GM12878 (cell line): ENCODE measurements at regions of chrX and their contacts with region 1.

Region 1: GRCh38 chrX:17046478-17047097 is 100.1 kb downstream of the REPS2 start:
- DNase-seq: peak; percentile 21
- ATAC-seq: peak; percentile 97
- H3K4me3 ChIP-seq: no peak overlapping the region
- H3K27ac ChIP-seq: no peak overlapping the region
- H3K4me1 ChIP-seq: no peaks in the 10 kb centered on the region
- H3K27me3 ChIP-seq: no peaks in the 10 kb centered on the region; a peak in 1 of 4 replicates
- CTCF ChIP-seq: peak; percentile 83 to 85 (median 84)
- EP300 ChIP-seq: no peak
- POLR2A ChIP-seq: no peak
- RAD21 ChIP-seq: peak; percentile 88

Region 2: DNA sequence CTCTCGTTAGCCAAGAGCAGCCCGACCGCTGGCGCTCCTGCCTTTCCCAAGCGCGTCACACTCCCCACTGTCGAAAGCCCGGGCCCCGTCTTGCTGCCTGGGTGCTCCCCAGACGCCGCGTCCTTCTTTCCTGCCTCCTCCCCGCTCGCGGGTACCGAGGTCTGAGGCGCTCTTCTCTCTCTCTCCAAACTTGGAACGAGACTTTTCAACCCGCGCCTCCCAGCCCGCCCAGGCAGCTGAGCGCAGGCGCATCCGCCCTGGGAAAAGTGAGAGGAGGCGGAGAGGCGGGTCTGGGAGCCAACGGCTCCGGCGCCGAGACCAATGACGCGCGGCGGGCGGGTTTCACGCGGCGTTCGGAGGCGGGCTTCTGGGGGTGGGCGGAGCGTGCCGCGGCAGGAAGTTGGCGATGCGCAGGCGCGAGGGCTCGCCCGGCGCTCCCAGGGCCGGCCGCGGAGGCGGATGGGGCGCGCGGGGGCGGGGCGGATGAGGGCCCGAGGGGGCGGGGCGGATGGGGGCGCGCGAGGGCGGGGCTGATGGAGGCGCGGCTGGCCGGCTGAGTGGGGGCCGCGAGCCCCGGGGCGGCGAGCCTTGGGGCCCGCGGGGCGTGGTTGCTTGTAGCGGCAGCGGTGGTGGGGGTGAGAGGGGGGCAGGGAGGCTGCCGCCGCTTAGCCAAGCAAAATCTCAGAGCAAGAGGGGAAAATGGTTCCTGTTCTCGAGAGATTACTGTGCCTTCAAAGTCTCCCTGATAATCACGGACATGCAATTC is 176.3 kb before region 1 on chrX and contains the start of gene RBBP7:
- CTCF ChIA-PET with region 1: interaction called, 10 read pairs
- POLR2A ChIA-PET with region 1: no interaction called
- RAD21 ChIA-PET with region 1: interaction called, 7 read pairs
- SMC1A ChIA-PET with region 1: interaction called, 5 read pairs
- in situ Hi-C with region 1: no loop called
- intact Hi-C with region 1: no loop called
- DNase-seq: peak; percentile 57
- ATAC-seq: peak; percentile 89
- H3K4me3 ChIP-seq: peak within 1 kb of the TSS; percentile 93
- H3K27ac ChIP-seq: peak within 1 kb of the TSS; percentile 92
- H3K4me1 ChIP-seq: peaks cover 7% of the 10 kb centered on the region
- H3K27me3 ChIP-seq: peaks cover 0 to 6% of the 10 kb centered on the region in 2 experiments; a peak in 1 of 4 replicates
- CTCF ChIP-seq: no peak
- EP300 ChIP-seq: no peak
- POLR2A ChIP-seq: peak; percentile 84
- RAD21 ChIP-seq: no peak
- polyA plus RNA-seq, gene RBBP7: 95.3 to 155 TPM

Region 3: GRCh38 chrX:16993791-16994318 is 52.7 kb before region 1 on chrX:
- CTCF ChIA-PET with region 1: interaction called, 6 read pairs
- POLR2A ChIA-PET with region 1: no interaction called
- RAD21 ChIA-PET with region 1: interaction called, 23 read pairs
- SMC1A ChIA-PET with region 1: interaction called, 3 read pairs
- in situ Hi-C with region 1: no loop called
- intact Hi-C with region 1: no loop called
- DNase-seq: no peak
- ATAC-seq: peak; percentile 48; the same call in 1 of the 3 replicates
- H3K4me3 ChIP-seq: no peak overlapping the region
- H3K27ac ChIP-seq: no peak overlapping the region
- H3K4me1 ChIP-seq: no peaks in the 10 kb centered on the region
- H3K27me3 ChIP-seq: peaks cover 0 to 4% of the 10 kb centered on the region in 2 experiments; a peak in 1 of 4 replicates
- CTCF ChIP-seq: peak; percentile 18 to 34 (median 27); a peak in 3 of 6 replicates
- EP300 ChIP-seq: no peak
- POLR2A ChIP-seq: no peak
- RAD21 ChIP-seq: no peak

Region 4: DNA sequence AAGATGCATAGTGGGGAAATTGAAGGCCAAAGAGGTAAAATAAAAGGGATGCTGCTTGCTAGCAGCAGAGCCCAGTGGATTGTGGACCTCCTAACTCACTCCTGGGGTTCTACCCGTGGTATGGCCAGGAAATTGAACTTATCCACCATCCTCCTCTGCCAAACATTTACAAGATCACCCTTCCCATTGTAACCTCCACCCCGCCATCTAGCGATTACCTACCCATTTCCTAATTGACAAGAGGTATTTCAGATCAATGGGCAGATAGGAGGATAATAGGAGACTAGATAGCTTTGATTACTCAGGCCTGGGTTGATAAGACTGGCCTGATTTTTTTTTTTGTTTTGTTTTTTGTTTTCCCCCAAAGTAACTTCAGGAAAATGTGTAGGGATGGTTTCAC is 32.4 kb before region 1 on chrX:
- CTCF ChIA-PET with region 1: interaction called, 96 read pairs
- POLR2A ChIA-PET with region 1: interaction called, 4 read pairs
- RAD21 ChIA-PET with region 1: interaction called, 3 read pairs
- SMC1A ChIA-PET with region 1: interaction called, 67 read pairs
- in situ Hi-C with region 1: no loop called
- intact Hi-C with region 1: no loop called
- DNase-seq: no peak
- ATAC-seq: no peak
- H3K4me3 ChIP-seq: no peak overlapping the region
- H3K27ac ChIP-seq: no peak overlapping the region
- H3K4me1 ChIP-seq: no peaks in the 10 kb centered on the region; the same call in 1 of the 2 replicates
- H3K27me3 ChIP-seq: no peaks in the 10 kb centered on the region; a peak in 2 of 4 replicates
- CTCF ChIP-seq: no peak
- EP300 ChIP-seq: no peak
- POLR2A ChIP-seq: no peak
- RAD21 ChIP-seq: no peak

Region 5: DNA sequence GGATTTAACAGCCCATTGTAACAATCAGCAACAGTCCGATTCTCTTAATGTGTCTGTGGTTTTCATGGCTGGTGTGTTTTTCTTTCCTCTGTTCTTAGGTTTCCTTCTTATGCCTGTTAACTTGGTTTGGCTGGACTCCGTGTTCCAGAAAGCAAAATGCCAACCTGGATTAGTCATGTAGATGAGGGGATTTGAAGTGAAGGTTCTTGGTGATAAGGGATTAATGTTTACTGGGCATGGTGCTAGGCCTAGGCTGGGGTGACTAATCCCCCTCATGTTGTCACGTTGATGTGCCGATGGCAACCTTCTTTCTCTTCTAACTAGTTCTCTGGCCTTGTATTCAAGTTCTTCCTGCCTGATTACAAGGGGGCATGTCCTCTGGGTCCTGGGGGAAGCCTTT is 14.2 kb before region 1 on chrX:
- CTCF ChIA-PET with region 1: interaction called, 30 read pairs
- POLR2A ChIA-PET with region 1: no interaction called
- RAD21 ChIA-PET with region 1: interaction called, 5 read pairs
- SMC1A ChIA-PET with region 1: interaction called, 13 read pairs
- in situ Hi-C with region 1: no loop called
- intact Hi-C with region 1: no loop called
- DNase-seq: no peak
- ATAC-seq: no peak
- H3K4me3 ChIP-seq: no peak overlapping the region
- H3K27ac ChIP-seq: no peak overlapping the region
- H3K4me1 ChIP-seq: no peaks in the 10 kb centered on the region
- H3K27me3 ChIP-seq: peaks cover 0 to 2% of the 10 kb centered on the region in 2 experiments; a peak in 3 of 4 replicates
- CTCF ChIP-seq: no peak
- EP300 ChIP-seq: no peak
- POLR2A ChIP-seq: no peak
- RAD21 ChIP-seq: no peak

Region 6: GRCh38 chrX:17077361-17077760 is 30.8 kb after region 1 on chrX:
- CTCF ChIA-PET with region 1: interaction called, 10 read pairs
- POLR2A ChIA-PET with region 1: no interaction called
- RAD21 ChIA-PET with region 1: interaction called, 3 read pairs
- SMC1A ChIA-PET with region 1: interaction called, 7 read pairs
- in situ Hi-C with region 1: no loop called
- intact Hi-C with region 1: no loop called
- DNase-seq: no peak
- ATAC-seq: no peak
- H3K4me3 ChIP-seq: no peak overlapping the region
- H3K27ac ChIP-seq: no peak overlapping the region
- H3K4me1 ChIP-seq: no peaks in the 10 kb centered on the region
- H3K27me3 ChIP-seq: peaks cover 0 to 3% of the 10 kb centered on the region in 2 experiments; a peak in 3 of 4 replicates
- CTCF ChIP-seq: no peak
- EP300 ChIP-seq: no peak
- POLR2A ChIP-seq: no peak
- RAD21 ChIP-seq: no peak